Activated B cell treated with CpG ODN at 0.5 μM for 24 hours (primary cell): ENCODE measurements at regions of chr4 and their contacts with region 1.

Region 1: GRCh38 chr4:13484122-13484748 is at the start of gene RAB28:
- DNase-seq: peak; percentile 93
- ATAC-seq: peak; percentile 93
- H3K4me3 Mint-ChIP-seq: peak within 1 kb of the TSS; percentile 96
- H3K27ac Mint-ChIP-seq: peak within 1 kb of the TSS; percentile 99
- H3K4me1 Mint-ChIP-seq: peaks cover 21% of the 10 kb centered on the region
- H3K27me3 Mint-ChIP-seq: peaks cover 14% of the 10 kb centered on the region
- CTCF ChIP-seq: no peak
- total RNA-seq, gene RAB28: 16.0 and 16.9 TPM in 2 replicates

Region 2: DNA sequence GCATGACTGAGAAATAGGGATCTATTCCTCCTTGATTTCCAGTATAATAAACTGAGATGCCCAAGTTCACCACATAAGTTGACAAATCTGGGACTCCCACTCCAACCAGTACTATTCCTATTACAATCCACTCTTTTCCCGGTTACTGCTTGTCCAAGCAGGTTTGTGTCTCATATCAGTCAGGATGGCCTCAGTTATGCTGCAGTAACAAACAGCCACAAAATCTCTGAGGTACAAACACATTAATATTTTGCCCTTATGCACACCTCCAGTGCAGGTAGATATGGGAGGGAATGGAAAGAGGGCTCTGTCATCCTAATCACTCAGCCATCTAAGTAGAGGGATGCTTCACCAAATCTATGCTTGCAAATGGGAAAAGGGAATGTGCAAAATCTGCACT is 207.9 kb before region 1 on chr4:
- CTCF ChIA-PET with region 1: no interaction called
- POLR2A ChIA-PET with region 1: no interaction called
- intact Hi-C with region 1: no loop called
- DNase-seq: no peak
- ATAC-seq: no peak
- H3K4me3 Mint-ChIP-seq: no peak overlapping the region
- H3K27ac Mint-ChIP-seq: no peak overlapping the region
- H3K4me1 Mint-ChIP-seq: no peaks in the 10 kb centered on the region
- H3K27me3 Mint-ChIP-seq: no peaks in the 10 kb centered on the region
- CTCF ChIP-seq: no peak

Region 3: GRCh38 chr4:13378973-13379759 is 105.1 kb before region 1 on chr4:
- CTCF ChIA-PET with region 1: no interaction called
- POLR2A ChIA-PET with region 1: no interaction called
- intact Hi-C with region 1: loop called (anchors 2 kb)
- DNase-seq: no peak
- ATAC-seq: peak; percentile 89
- H3K4me3 Mint-ChIP-seq: no peak overlapping the region
- H3K27ac Mint-ChIP-seq: no peak overlapping the region
- H3K4me1 Mint-ChIP-seq: peaks cover 1% of the 10 kb centered on the region
- H3K27me3 Mint-ChIP-seq: no peaks in the 10 kb centered on the region
- CTCF ChIP-seq: no peak

Region 4: DNA sequence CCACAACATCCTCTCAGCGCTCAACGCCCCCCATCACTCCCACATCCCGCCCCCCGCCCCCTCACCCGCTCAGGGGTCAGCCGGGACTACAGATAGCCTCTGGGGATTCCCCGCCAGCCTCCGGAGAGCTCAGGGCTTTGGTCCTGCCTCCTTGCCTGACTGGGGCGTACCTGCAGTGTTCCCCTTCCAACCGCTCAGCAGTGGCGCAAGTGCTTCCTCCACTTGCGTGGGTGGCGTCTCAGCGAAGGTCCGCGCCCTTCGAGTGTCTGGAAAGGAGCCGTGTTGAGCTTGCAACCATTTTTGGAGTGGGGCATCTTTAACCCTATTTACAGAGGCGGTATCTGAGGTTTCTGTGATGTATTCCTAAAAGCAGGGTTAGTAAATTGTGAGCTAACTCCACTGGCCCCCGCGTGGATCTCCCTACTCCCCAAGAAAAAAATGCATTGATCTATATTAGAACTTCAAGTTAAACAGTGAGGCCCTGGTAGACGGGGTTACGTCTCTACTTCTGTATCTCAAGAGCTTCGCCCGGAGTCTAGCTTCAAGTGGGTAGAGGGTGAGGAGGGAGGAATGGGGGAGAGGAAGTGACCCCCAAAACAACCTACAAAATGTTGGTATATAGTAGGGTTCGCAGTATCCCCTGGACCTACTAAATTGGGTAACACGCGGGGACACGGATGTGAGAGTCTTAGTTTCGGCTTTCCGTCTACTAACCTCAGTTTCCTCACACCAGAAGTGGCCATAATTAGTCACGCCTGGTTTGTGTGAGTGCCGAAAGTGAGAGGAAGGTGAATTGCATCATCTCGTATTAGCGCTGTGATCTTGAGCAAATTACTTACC is 44.0 kb after region 1 on chr4:
- CTCF ChIA-PET with region 1: no interaction called
- POLR2A ChIA-PET with region 1: interaction called, 3 read pairs
- intact Hi-C with region 1: loop called (anchors 2 kb)
- DNase-seq: no peak
- ATAC-seq: peak; percentile 52
- H3K4me3 Mint-ChIP-seq: peak overlapping the region; percentile 62
- H3K27ac Mint-ChIP-seq: peak overlapping the region; percentile 19
- H3K4me1 Mint-ChIP-seq: peaks cover 28% of the 10 kb centered on the region
- H3K27me3 Mint-ChIP-seq: peaks cover 80% of the 10 kb centered on the region
- CTCF ChIP-seq: no peak